ENCODE measurements at regions of chr4 and their contacts with region 1.

Region 1: GRCh38 chr4:6848717-6849305 is 60.8 kb upstream of the TBC1D14 start:
- DNase-seq: no peak
- ATAC-seq: peak in 4 of 8 donors; percentile 26 to 40 (median 30)
- H3K4me3 ChIP-seq: no peak overlapping the region
- H3K27ac ChIP-seq: no peak overlapping the region
- H3K4me1 ChIP-seq: peaks cover 5 to 44% (median 23%) of the 10 kb centered on the region in 9 donors
- H3K27me3 ChIP-seq: no peaks in the 10 kb centered on the region
- CTCF ChIP-seq: no peak

Region 2: GRCh38 chr4:6802025-6802424 is 46.8 kb before region 1 on chr4:
- intact Hi-C with region 1: loop called in 1 of 10 experiments (anchors 5 kb)
- DNase-seq: no peak
- ATAC-seq: peak in 5 of 8 donors; percentile 46 to 78 (median 47)
- H3K4me3 ChIP-seq: no peak overlapping the region
- H3K27ac ChIP-seq: no peak overlapping the region
- H3K4me1 ChIP-seq: peaks cover 0 to 81% (median 51%) of the 10 kb centered on the region in 9 donors
- H3K27me3 ChIP-seq: no peaks in the 10 kb centered on the region
- CTCF ChIP-seq: no peak

Measured in heart right ventricle (tissue), 16 donors.